Activated CD4-positive, alpha-beta memory T cell treated with anti-CD3 and anti-CD28 coated beads for 36 hours (primary cell): ENCODE measurements at regions of chr17 and their contacts with region 1.

Region 1: GRCh38 chr17:79252886-79253285 is 178.3 kb downstream of the ENGASE start:
- DNase-seq: no peak
- H3K4me3 Mint-ChIP-seq: no peak overlapping the region
- H3K27ac Mint-ChIP-seq: no peak overlapping the region
- H3K4me1 Mint-ChIP-seq: no peaks in the 10 kb centered on the region
- H3K27me3 Mint-ChIP-seq: peaks cover 20% of the 10 kb centered on the region

Region 2: DNA sequence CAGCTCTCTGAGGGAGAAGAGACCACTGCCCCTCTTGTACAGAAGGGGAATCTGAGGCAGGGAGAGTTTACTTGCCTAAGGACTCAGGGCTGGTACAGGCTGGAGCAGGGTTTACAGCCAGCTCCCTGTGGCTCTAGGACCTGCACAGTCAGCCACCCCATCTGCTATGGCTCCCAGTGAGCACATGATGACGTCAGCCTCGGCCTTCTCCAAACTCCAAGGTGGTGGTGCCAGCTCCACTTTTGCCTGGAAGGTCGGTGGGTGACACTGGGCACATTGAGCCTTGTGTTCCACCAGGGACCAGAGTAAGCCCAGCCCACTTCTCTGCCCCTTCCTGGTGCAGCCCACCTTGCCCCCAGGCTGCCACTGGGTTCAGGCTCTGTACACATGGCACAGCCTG is 23.9 kb after region 1 on chr17:
- CTCF ChIA-PET with region 1: no interaction called
- POLR2A ChIA-PET with region 1: no interaction called
- intact Hi-C with region 1: loop called (anchors 2 kb)
- DNase-seq: no peak
- H3K4me3 Mint-ChIP-seq: no peak overlapping the region
- H3K27ac Mint-ChIP-seq: no peak overlapping the region
- H3K4me1 Mint-ChIP-seq: no peaks in the 10 kb centered on the region
- H3K27me3 Mint-ChIP-seq: peaks cover 9% of the 10 kb centered on the region